Left lung (tissue), 14 donors: ENCODE measurements at regions of chr4 and their contacts with region 1.

Region 1: GRCh38 chr4:87465739-87466366 is 43.5 kb downstream of the NUDT9 start:
- DNase-seq: peak in 2 of 4 donors; percentile 28 to 50
- ATAC-seq: peak; percentile 49
- H3K4me3 ChIP-seq: no peak overlapping the region
- H3K27ac ChIP-seq: no peak overlapping the region
- H3K4me1 ChIP-seq: no peaks in the 10 kb centered on the region
- H3K27me3 ChIP-seq: no peaks in the 10 kb centered on the region
- CTCF ChIP-seq: peak; percentile 33 to 55

Region 2: DNA sequence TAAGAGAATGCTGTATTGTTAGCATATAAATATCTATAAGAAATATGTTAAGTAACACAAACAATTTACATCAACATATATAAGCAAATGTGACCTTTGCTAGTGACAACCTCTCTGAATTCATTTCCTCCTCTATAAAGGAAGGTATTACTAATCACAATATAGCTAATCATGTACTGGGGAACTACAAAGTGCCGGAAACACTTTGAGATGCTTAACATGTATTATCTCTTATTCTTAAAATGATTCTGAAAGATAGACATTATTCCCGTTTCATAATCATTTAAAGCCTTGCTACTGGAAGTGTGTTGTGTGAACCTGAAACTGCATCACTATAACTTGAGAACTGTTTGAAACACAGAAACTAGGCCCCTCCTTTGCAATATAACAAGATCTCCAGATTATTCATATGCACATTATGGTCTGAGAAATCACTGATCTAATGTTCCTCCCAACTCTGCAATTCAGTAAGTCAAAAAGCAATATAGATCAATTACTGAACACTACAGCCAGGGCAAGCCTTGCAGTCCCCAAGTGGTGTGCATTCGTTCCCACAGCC is 299.5 kb before region 1 on chr4:
- intact Hi-C with region 1: no loop called
- DNase-seq: no peak
- ATAC-seq: no peak
- H3K4me3 ChIP-seq: no peak overlapping the region
- H3K27ac ChIP-seq: no peak overlapping the region
- H3K4me1 ChIP-seq: no peaks in the 10 kb centered on the region
- H3K27me3 ChIP-seq: no peaks in the 10 kb centered on the region
- CTCF ChIP-seq: no peak

Region 3: GRCh38 chr4:87363567-87363966 is 102.3 kb before region 1 on chr4:
- intact Hi-C with region 1: loop called in 1 of 2 experiments (anchors 5 kb)
- DNase-seq: no peak
- ATAC-seq: no peak
- H3K4me3 ChIP-seq: no peak overlapping the region
- H3K27ac ChIP-seq: no peak overlapping the region
- H3K4me1 ChIP-seq: peaks cover 0 to 7% of the 10 kb centered on the region in 2 donors
- H3K27me3 ChIP-seq: no peaks in the 10 kb centered on the region
- CTCF ChIP-seq: no peak

Region 4: GRCh38 chr4:87716371-87717265 is 250.8 kb after region 1 on chr4:
- intact Hi-C with region 1: no loop called
- DNase-seq: no peak
- ATAC-seq: no peak
- H3K4me3 ChIP-seq: no peak overlapping the region
- H3K27ac ChIP-seq: no peak overlapping the region
- H3K4me1 ChIP-seq: peaks cover 0 to 3% of the 10 kb centered on the region in 2 donors
- H3K27me3 ChIP-seq: no peaks in the 10 kb centered on the region
- CTCF ChIP-seq: no peak

Region 5: GRCh38 chr4:87882321-87882720 is 416.5 kb after region 1 on chr4:
- intact Hi-C with region 1: no loop called
- DNase-seq: no peak
- ATAC-seq: no peak
- H3K4me3 ChIP-seq: no peak overlapping the region
- H3K27ac ChIP-seq: no peak overlapping the region
- H3K4me1 ChIP-seq: no peaks in the 10 kb centered on the region
- H3K27me3 ChIP-seq: no peaks in the 10 kb centered on the region
- CTCF ChIP-seq: no peak